Activated T-helper 1 cell treated with anti-CD3 and anti-CD28 coated beads, Interleukin-12 subunit alpha, Interleukin-12 subunit beta, Interleukin-2, Interleukin-4 antibody, amounts not matched to agents 30 ng/mL and 10 ng/mL and 1 ng/mL, durations not matched to agents 14 hours and 24 hours and 36 hours (primary cell): ENCODE measurements at regions of chr9 and their contacts with region 1.

Region 1: DNA sequence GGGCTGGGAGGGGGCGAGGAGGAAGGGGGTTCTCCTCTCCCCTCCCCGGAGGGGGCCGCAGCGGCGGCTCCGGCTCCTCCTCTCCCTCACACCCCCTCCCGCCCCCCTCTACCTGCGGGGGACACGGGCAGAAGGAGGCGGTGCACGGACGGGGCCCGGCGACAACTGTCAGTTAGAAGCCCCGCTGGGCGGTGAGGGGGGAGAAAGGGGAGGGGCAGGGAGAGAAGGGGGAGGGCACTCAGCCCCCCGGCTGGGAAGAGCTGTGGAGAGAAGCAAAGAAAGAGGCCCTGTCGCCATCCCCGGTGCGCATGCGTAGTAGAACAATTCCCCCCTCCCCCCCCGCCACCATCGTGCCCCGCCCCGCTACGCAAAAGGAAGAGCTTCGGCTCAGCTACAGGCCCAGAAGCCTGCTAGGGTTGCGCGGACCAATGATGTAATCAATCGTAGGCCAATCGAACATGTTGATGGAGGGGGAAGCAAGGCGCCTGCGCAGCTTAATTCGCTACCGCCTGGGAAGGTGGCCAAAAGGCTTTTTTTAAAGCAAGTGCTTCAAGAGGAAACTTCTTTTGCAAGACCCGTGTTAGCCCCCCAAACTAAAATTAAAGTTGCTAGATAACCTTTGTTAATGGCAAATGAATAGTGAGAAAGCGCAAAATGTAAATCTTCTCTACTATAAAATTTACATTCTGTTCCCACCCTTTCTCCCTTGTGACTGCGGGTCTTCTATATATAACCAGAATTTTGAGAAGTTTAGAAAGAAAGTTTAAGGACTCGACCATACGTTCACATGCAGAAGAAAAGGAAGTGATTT is 7.0 kb downstream of the RANBP6 start:
- DNase-seq: peak; percentile 91
- H3K4me3 Mint-ChIP-seq: peak overlapping the region; percentile 73
- H3K27ac Mint-ChIP-seq: peak overlapping the region; percentile 65
- H3K4me1 Mint-ChIP-seq: peaks cover 62% of the 10 kb centered on the region
- H3K27me3 Mint-ChIP-seq: no peaks in the 10 kb centered on the region

Region 2: DNA sequence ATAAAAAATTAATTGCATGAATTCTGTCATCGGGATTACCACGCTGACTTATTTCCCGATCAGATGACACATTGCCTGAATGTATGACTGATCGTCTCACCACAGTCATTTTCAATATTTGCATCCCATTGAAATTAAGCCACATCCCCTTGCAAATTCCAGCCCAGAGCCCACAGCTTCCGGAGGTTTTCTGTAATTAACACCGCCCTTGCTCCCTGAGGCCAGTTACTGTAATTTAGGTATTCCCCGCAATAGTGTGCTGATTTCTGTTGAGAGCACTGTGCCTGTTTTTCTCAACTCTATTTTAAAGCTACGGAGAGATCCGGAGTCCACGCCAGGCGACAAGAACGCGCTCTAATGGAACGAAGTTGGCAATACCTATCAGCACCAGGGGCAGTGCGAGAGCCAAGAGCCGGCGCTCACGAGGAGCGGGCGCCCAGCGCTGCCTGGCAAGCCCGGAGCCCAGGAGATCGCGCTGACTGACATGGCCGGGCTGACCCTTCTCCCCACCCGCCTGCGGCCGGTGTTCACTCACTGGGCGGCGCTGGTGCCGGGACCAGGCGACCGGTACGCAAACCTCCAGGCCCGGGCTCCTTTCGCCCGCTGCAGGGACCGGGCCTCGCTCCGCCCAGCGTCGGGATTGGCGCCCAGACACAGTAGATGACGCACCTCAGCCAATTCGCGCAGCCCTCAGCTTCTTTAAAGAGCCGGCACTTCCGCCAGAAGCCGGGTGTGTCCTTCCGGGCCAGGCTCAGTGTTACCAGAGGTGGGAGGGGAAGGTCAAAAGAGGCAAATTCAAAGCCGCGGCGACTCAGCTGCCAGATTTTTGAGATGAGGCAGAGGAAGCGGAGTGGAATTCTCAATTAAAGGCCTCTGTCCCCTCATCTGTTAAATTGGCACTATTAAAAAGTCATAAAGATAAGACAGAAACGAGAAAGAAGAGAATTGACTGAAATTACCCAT is 570.8 kb before region 1 on chr9 and contains the start of gene PLGRKT:
- intact Hi-C with region 1: loop called (anchors 5 kb)
- DNase-seq: peak; percentile 90
- H3K4me3 Mint-ChIP-seq: peak within 1 kb of the TSS; percentile 93
- H3K27ac Mint-ChIP-seq: peak within 1 kb of the TSS; percentile 93
- H3K4me1 Mint-ChIP-seq: peaks cover 66% of the 10 kb centered on the region
- H3K27me3 Mint-ChIP-seq: no peaks in the 10 kb centered on the region
- total RNA-seq, gene PLGRKT: 43.8 and 44.8 TPM in 2 replicates

Region 3: GRCh38 chr9:5799314-5799713 is 209.1 kb before region 1 on chr9:
- intact Hi-C with region 1: loop called (anchors 5 kb)
- DNase-seq: no peak
- H3K4me3 Mint-ChIP-seq: no peak overlapping the region
- H3K27ac Mint-ChIP-seq: no peak overlapping the region
- H3K4me1 Mint-ChIP-seq: peaks cover 37% of the 10 kb centered on the region
- H3K27me3 Mint-ChIP-seq: no peaks in the 10 kb centered on the region

Region 4: DNA sequence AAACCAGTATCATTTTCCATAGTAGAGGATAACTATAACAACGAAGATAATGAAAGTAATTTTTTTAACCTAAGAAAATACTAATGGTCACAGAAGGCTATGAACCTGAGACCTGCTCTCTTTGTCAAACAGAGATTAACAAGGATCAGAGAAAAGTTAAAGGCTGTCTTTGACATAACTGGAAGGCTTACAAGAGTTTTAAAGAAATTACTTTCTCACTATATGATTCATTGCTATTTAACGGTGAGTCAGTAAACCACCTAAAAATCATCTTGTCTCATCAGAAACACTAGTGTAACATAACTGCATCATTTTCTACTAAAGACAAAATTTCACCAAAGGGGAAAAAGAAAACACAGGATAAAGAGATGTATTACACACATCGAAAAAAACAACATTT is 98.4 kb before region 1 on chr9:
- intact Hi-C with region 1: loop called (anchors 1 kb)
- DNase-seq: no peak
- H3K4me3 Mint-ChIP-seq: no peak overlapping the region
- H3K27ac Mint-ChIP-seq: peak overlapping the region; percentile 84
- H3K4me1 Mint-ChIP-seq: peaks cover 17% of the 10 kb centered on the region
- H3K27me3 Mint-ChIP-seq: no peaks in the 10 kb centered on the region

Region 5: GRCh38 chr9:6024020-6024554 is 15.7 kb after region 1 on chr9:
- intact Hi-C with region 1: loop called (anchors 1 kb)
- DNase-seq: no peak
- H3K4me3 Mint-ChIP-seq: no peak overlapping the region
- H3K27ac Mint-ChIP-seq: no peak overlapping the region
- H3K4me1 Mint-ChIP-seq: peaks cover 6% of the 10 kb centered on the region
- H3K27me3 Mint-ChIP-seq: peaks cover 18% of the 10 kb centered on the region

Region 6: DNA sequence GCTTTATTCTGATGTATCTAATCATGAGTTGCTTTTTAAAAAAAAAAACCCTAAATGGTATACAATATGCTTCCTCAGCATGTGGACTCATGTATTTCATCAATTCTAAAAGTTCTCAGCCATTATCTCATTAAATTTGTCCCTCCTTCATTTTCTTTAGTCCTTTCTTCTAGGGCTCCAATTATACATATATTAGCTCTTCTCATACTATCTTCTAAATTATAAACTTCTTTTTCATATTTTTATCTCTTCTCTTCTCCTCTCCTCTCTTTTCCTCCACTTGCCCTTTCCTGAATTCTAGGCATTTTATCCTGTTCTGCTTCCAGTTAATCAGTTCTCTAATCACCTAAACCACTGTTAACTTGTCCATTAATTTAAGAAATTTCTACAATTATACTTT is 152.2 kb after region 1 on chr9:
- intact Hi-C with region 1: no loop called
- DNase-seq: no peak
- H3K4me3 Mint-ChIP-seq: no peak overlapping the region
- H3K27ac Mint-ChIP-seq: no peak overlapping the region
- H3K4me1 Mint-ChIP-seq: no peaks in the 10 kb centered on the region
- H3K27me3 Mint-ChIP-seq: peaks cover 4% of the 10 kb centered on the region

Region 7: DNA sequence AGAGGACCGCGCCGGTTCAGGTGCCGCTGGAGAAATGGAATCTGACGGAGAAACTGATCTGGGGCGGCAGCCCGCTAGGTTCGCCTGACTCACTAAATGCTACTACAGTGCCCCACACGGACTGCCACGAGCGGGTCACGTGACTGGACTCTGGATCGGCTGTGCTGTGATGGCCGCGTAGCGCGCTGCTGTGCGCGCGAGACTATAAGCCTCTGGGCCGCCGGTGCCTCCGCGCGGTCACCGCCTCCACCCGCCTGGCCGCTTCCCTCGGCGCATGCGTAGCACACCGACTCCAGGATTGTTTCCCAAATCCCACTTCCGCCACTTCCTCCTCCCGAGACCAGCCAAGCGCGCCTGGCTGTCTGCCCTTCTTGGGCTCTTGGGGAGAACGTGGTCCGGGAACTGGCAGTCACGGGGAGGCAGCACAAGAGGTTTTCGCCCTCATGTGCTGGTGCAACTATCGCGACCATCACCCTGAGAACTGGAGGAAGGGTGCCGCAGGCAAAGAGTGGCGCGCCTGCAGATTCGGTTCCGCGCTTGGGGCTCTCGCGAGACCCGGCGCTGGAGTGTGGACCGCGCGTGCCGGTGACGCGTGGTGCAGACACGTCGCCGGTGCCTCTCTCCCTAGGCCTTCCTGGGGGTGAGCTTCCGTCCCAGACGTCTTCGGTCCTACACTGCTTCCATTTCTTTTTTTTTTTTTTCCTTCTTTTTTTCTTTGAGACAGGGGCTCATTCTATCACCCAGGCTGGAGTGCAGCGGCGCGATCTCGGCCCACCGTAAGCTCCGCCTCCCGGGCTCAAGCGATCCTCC is 673.0 kb after region 1 on chr9:
- intact Hi-C with region 1: loop called (anchors 1 kb)
- DNase-seq: peak; percentile 88
- H3K4me3 Mint-ChIP-seq: peak overlapping the region; percentile 94
- H3K27ac Mint-ChIP-seq: peak overlapping the region; percentile 99
- H3K4me1 Mint-ChIP-seq: peaks cover 24% of the 10 kb centered on the region
- H3K27me3 Mint-ChIP-seq: peaks cover 3% of the 10 kb centered on the region

Region 8: GRCh38 chr9:7976167-7976755 is 1967.9 kb after region 1 on chr9:
- intact Hi-C with region 1: loop called (anchors 10 kb)
- DNase-seq: peak; percentile 68
- H3K4me3 Mint-ChIP-seq: peak overlapping the region; percentile 15
- H3K27ac Mint-ChIP-seq: peak overlapping the region; percentile 73
- H3K4me1 Mint-ChIP-seq: peaks cover 63% of the 10 kb centered on the region
- H3K27me3 Mint-ChIP-seq: no peaks in the 10 kb centered on the region